ENCODE measurements at regions of chr21 and their contacts with region 1.

Region 1: GRCh38 chr21:43789276-43790009 is at the start of gene RRP1:
- DNase-seq: peak; percentile 73 to 97 (median 92)

Region 2: GRCh38 chr21:43728467-43729390 is 60.7 kb before region 1 on chr21:
- intact Hi-C with region 1: loop called (anchors 10 kb)
- DNase-seq: peak; percentile 84 to 99 (median 93)

Region 3: DNA sequence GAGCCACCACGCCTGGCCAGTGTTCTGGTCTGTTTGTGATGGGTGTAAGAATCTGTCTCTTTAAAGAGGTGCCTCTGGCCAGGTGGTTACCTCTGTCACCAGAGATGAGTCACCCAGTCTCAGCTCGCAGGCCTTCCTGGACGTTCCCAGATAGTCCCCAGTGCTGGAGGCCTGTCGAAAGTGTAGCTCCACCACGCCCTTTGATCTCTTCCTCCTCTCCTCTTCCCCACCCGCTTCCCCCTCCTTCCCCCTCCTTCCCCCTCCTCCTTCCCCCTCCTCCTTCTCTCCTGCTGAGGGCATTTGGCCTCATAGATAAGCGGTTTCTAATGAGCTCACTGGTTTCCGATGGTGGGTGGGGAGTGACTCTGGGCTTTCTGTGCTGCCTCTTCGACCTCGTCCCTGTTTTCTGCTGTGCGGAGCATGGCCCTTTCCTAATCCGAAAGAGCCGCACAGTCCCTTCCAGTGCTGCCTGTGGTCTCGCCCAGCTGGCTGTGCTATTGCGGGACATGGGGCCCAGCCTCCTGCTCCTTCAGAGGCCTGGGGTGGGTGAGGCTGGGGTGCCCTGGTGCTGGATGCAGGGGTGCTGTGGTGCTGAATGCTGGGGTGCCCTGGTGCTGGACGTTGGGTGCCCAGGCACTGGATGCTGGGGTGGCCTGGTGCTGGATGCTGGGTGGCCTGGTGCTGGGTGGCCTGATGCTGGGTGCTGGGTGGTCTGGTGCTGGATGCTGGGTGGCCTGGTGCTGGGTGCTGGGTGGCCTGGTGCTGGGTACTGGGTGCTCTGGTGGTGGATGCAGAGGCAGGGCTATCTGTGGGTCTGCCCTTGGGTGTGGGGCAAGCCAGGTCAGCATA is 94.8 kb after region 1 on chr21:
- intact Hi-C with region 1: no loop called
- DNase-seq: peak in 2 of 42 donors; percentile 24

Region 4: GRCh38 chr21:44267655-44268142 is 478.3 kb after region 1 on chr21:
- intact Hi-C with region 1: no loop called
- DNase-seq: peak in 14 of 42 donors; percentile 7 to 52 (median 24)